ENCODE measurements at regions of chr1 and their contacts with region 1.

Region 1: DNA sequence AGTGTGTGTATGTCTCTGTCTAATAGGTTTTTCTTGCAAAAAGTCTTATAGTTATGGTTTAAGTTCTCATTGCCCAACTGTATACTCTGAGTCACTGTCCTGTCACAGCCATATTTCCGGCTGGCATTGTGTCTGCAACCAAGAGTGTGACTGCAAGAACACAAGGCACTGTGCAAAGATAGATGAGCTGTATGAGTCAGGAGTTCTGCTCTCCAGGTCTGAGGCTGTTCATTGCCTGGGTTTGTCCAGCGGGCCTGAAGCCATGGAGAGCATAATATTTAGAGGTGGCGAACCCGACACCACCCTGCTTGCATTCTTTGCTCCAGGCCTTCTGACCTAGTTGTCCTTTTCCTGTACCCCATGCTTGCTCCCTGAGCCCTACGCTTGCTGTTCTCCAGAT is 50.9 kb upstream of the CNIH3 start:
- DNase-seq: peak; percentile 99
- ATAC-seq: peak; percentile 94
- H3K4me3 ChIP-seq: peak overlapping the region; percentile 43
- H3K27ac ChIP-seq: peak overlapping the region; percentile 94
- H3K4me1 ChIP-seq: peaks cover 54% of the 10 kb centered on the region
- H3K27me3 ChIP-seq: no peaks in the 10 kb centered on the region
- CTCF ChIP-seq: no peak

Region 2: DNA sequence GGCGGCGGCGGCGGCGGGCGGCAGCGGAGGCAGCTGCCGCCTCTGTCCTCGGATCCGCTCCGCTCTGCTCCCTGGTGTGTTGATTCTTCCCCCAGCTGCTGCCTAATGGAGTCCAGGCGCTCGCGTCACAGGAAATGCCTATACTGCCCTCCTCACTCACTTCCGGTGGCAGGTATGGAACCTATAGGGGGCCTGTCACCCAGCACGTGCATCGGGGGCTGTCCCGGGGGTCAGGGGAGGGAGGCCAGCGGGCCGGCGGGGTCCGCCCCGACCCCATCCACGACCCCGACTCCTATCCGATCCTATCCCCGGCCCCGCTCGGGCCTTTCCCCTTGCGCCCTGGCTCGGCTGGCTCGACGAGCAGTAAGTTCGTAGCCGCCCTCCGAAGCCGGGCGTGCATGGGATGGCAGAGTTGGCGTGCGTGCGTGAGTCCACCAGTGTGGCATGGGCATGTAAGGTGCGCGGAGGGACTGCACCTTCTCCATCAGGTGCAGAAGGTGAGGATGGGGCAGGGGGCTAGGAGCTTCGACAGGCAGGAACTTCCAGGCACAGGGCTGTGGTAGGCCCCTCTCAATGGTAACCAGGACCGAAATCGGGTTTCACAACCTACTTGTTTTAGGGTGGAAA is 130.4 kb before region 1 on chr1 and contains the start of gene WDR26:
- CTCF ChIA-PET with region 1: no interaction called
- POLR2A ChIA-PET with region 1: no interaction called
- intact Hi-C with region 1: loop called (anchors 5 kb)
- DNase-seq: peak; percentile 81
- ATAC-seq: peak; percentile 76
- H3K4me3 ChIP-seq: peak within 1 kb of the TSS; percentile 83
- H3K27ac ChIP-seq: peak within 1 kb of the TSS; percentile 67
- H3K4me1 ChIP-seq: peaks cover 46% of the 10 kb centered on the region
- H3K27me3 ChIP-seq: no peaks in the 10 kb centered on the region
- CTCF ChIP-seq: 0 out of 2 replicates have a peak, but pooled peaks have one; percentile 24
- total RNA-seq, gene WDR26: 40.7 and 45.2 TPM in 2 replicates

Region 3: DNA sequence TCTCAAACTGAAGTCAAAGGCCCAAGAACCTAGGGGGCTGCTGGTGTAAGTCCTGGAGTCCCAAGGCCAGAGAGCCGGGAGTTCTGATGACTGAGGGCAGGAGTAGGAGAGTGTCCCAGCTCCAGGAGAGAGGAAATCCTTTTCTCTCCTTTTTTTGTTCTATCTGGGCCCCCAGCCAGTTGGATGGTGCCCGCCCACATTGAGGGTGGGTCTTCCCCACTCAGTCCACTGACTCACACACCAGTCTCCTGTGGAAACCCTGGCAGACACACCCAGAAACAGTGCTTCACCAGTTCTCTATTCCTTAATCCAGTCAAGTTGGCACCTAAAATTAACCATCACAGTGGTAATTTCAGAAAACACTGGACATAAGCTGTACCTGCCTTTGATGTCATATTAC is 117.9 kb before region 1 on chr1:
- CTCF ChIA-PET with region 1: no interaction called
- POLR2A ChIA-PET with region 1: no interaction called
- intact Hi-C with region 1: no loop called
- DNase-seq: peak; percentile 71
- ATAC-seq: peak; percentile 97
- H3K4me3 ChIP-seq: no peak overlapping the region
- H3K27ac ChIP-seq: no peak overlapping the region
- H3K4me1 ChIP-seq: peaks cover 12% of the 10 kb centered on the region
- H3K27me3 ChIP-seq: no peaks in the 10 kb centered on the region
- CTCF ChIP-seq: no peak

Region 4: DNA sequence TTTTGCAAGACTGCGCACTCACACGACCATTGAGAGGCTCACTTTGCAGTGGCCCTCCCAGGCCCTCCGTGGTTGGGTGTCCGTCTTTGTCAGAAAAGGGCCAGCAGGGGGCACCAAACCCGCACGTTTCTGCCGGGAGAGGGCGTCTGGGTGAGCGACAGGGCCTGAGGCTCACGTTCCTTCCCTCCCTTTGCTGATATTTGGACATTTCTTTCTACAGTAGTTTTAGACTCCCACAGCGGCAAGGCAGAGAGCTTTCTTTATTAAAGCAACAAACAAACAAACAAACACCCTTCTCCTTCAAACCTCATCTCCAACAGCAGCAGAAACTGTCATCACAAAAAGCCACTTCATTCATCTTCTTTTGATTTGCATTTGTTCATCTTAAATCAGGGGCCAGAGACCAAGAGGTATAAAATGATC is 51.4 kb before region 1 on chr1:
- CTCF ChIA-PET with region 1: no interaction called
- POLR2A ChIA-PET with region 1: no interaction called
- intact Hi-C with region 1: loop called (anchors 2 kb)
- DNase-seq: peak; percentile 97
- ATAC-seq: peak; percentile 95
- H3K4me3 ChIP-seq: no peak overlapping the region
- H3K27ac ChIP-seq: no peak overlapping the region
- H3K4me1 ChIP-seq: peaks cover 25% of the 10 kb centered on the region
- H3K27me3 ChIP-seq: no peaks in the 10 kb centered on the region
- CTCF ChIP-seq: peak; percentile 98

Region 5: DNA sequence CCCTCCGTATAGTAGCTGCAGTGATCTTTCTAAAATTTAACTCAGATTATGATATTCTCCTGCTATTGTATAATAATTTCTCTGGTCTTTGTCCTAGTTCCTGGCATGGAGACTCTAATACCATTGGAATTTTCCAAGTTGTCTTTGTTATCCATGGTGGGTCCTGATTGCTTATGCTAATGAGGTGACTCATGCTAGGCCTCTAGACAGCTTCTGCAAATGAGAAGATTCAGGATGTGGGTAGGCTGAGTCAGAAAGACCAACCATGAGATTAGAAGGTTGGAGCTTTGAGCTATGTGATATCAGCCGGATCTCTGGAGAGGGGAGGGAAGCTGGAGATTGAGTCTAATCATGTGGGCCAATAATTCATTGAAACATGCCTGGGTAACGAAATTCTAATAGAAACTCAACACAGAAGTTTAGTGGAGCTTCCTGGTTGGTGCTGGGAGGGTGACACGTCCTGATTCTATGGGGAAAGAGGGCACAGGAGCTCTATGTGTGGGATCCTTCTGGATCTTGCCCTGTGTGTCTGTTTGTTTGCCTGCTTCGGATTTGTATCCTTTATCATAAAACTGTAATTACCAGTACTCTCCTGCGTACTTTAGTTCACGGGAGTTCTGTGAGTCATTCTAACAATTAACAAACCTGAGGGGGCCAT is 22.3 kb before region 1 on chr1:
- CTCF ChIA-PET with region 1: no interaction called
- POLR2A ChIA-PET with region 1: no interaction called
- intact Hi-C with region 1: loop called (anchors 1 kb)
- DNase-seq: peak; percentile 99
- ATAC-seq: peak; percentile 94
- H3K4me3 ChIP-seq: peak overlapping the region; percentile 28
- H3K27ac ChIP-seq: peak overlapping the region; percentile 88
- H3K4me1 ChIP-seq: peaks cover 38% of the 10 kb centered on the region
- H3K27me3 ChIP-seq: no peaks in the 10 kb centered on the region
- CTCF ChIP-seq: no peak

Region 6: GRCh38 chr1:224615861-224616755 is 50.9 kb after region 1 on chr1 and contains the start of gene CNIH3:
- CTCF ChIA-PET with region 1: interaction called, 3 read pairs
- POLR2A ChIA-PET with region 1: interaction called, 3 read pairs
- intact Hi-C with region 1: loop called (anchors 5 kb)
- DNase-seq: peak; percentile 75
- ATAC-seq: peak; percentile 86
- H3K4me3 ChIP-seq: peak within 1 kb of the TSS; percentile 80
- H3K27ac ChIP-seq: no peak within 1 kb of the TSS
- H3K4me1 ChIP-seq: peaks cover 16% of the 10 kb centered on the region; the same call in 1 of the 2 replicates
- H3K27me3 ChIP-seq: no peaks in the 10 kb centered on the region
- CTCF ChIP-seq: no peak
- total RNA-seq, gene CNIH3: 5.6 and 7.4 TPM in 2 replicates

Region 7: GRCh38 chr1:224637515-224637914 is 72.3 kb after region 1 on chr1:
- CTCF ChIA-PET with region 1: no interaction called
- POLR2A ChIA-PET with region 1: interaction called, 3 read pairs
- intact Hi-C with region 1: loop called (anchors 1 kb)
- DNase-seq: peak; percentile 99
- ATAC-seq: peak; percentile 83
- H3K4me3 ChIP-seq: peak overlapping the region; percentile 7; the same call in 1 of the 2 replicates
- H3K27ac ChIP-seq: peak overlapping the region; percentile 66
- H3K4me1 ChIP-seq: peaks cover 66% of the 10 kb centered on the region
- H3K27me3 ChIP-seq: no peaks in the 10 kb centered on the region
- CTCF ChIP-seq: no peak

Region 8: GRCh38 chr1:224800486-224801119 is 235.4 kb after region 1 on chr1:
- CTCF ChIA-PET with region 1: no interaction called
- POLR2A ChIA-PET with region 1: no interaction called
- intact Hi-C with region 1: no loop called
- DNase-seq: no peak
- ATAC-seq: no peak
- H3K4me3 ChIP-seq: no peak overlapping the region
- H3K27ac ChIP-seq: no peak overlapping the region
- H3K4me1 ChIP-seq: peaks cover 3% of the 10 kb centered on the region; the same call in 1 of the 2 replicates
- H3K27me3 ChIP-seq: no peaks in the 10 kb centered on the region
- CTCF ChIP-seq: no peak